ENCODE measurements at regions of chr17 and their contacts with region 1.

Region 1: GRCh38 chr17:64025732-64026294 is 5.4 kb upstream of the ICAM2 start:
- DNase-seq: peak; percentile 95 to 98 (median 96)
- H3K4me3 ChIP-seq: peak overlapping the region in 1 of 2 donors; percentile 43
- H3K4me3 Mint-ChIP-seq: peak overlapping the region; percentile 71 to 94 (median 87)
- H3K27ac ChIP-seq: peak overlapping the region; percentile 89
- H3K27ac Mint-ChIP-seq: peak overlapping the region; percentile 94 to 99 (median 98)
- H3K4me1 ChIP-seq: peaks cover 80% of the 10 kb centered on the region
- H3K4me1 Mint-ChIP-seq: peaks cover 42 to 75% (median 59%) of the 10 kb centered on the region in 4 donors
- H3K27me3 ChIP-seq: no peaks in the 10 kb centered on the region
- H3K27me3 Mint-ChIP-seq: no peaks in the 10 kb centered on the region

Region 2: GRCh38 chr17:63919311-63919723 is 106.5 kb before region 1 on chr17:
- CTCF ChIA-PET with region 1: interaction called, 351 read pairs
- POLR2A ChIA-PET with region 1: interaction called, 46 read pairs
- intact Hi-C with region 1: loop called (anchors 1 kb)
- DNase-seq: peak; percentile 70 to 81 (median 75)
- H3K4me3 ChIP-seq: no peak overlapping the region
- H3K4me3 Mint-ChIP-seq: no peak overlapping the region
- H3K27ac ChIP-seq: no peak overlapping the region
- H3K27ac Mint-ChIP-seq: peak overlapping the region in 6 of 7 donors; percentile 38 to 87 (median 62)
- H3K4me1 ChIP-seq: peaks cover 7% of the 10 kb centered on the region
- H3K4me1 Mint-ChIP-seq: peaks cover 6% of the 10 kb centered on the region in 4 donors
- H3K27me3 ChIP-seq: no peaks in the 10 kb centered on the region
- H3K27me3 Mint-ChIP-seq: peaks cover 0 to 2% of the 10 kb centered on the region in 2 donors

Region 3: DNA sequence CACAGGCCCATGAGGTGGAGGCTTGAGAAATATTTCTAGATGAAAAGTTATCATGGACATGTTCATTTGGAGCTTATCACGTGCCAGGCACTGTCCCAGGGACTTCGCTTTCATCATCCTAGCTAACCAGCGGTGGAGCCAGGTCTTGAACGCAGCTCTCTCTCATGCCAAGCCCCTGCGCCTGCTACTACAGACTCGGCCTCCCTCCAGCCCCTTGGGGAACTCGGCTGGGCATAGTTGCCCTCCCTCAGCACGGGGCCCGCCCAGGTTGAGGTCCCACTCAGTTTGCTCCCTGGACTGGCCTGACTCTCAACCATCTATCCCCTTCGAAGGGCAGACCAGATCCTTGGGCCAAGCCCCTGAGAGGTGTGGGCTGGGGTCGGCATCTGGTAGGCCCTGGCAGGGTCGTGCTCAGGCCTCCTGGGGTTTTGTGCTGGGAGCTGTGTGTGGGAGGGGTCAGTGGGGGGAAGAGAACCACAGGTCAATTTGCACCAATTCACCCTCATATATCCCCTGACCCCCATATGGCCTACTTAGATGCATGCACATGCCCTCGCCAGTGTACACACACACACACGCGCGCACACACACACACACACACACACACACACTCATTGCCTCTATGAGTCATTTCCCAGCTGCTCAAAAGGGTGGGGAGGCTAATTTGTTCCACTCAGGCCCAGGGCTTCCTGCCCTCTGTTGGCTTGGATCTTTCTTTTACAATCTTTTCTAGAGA is 41.0 kb before region 1 on chr17:
- CTCF ChIA-PET with region 1: interaction called, 556 read pairs
- POLR2A ChIA-PET with region 1: interaction called, 37 read pairs
- intact Hi-C with region 1: no loop called
- DNase-seq: peak; percentile 46 to 86 (median 70)
- H3K4me3 ChIP-seq: no peak overlapping the region
- H3K4me3 Mint-ChIP-seq: peak overlapping the region in 5 of 8 donors; percentile 10 to 86 (median 47)
- H3K27ac ChIP-seq: no peak overlapping the region
- H3K27ac Mint-ChIP-seq: peak overlapping the region; percentile 61 to 98 (median 87)
- H3K4me1 ChIP-seq: peaks cover 18% of the 10 kb centered on the region
- H3K4me1 Mint-ChIP-seq: peaks cover 16 to 29% (median 19%) of the 10 kb centered on the region in 4 donors
- H3K27me3 ChIP-seq: no peaks in the 10 kb centered on the region
- H3K27me3 Mint-ChIP-seq: peaks cover 0 to 2% of the 10 kb centered on the region in 2 donors

Region 4: GRCh38 chr17:64051153-64051552 is 25.3 kb after region 1 on chr17:
- CTCF ChIA-PET with region 1: interaction called, 110 read pairs
- POLR2A ChIA-PET with region 1: interaction called, 40 read pairs
- intact Hi-C with region 1: loop called (anchors 2 kb)
- DNase-seq: peak; percentile 50 to 84 (median 73)
- H3K4me3 ChIP-seq: no peak overlapping the region
- H3K4me3 Mint-ChIP-seq: peak overlapping the region in 7 of 8 donors; percentile 37 to 78 (median 68)
- H3K27ac ChIP-seq: peak overlapping the region; percentile 52
- H3K27ac Mint-ChIP-seq: peak overlapping the region; percentile 69 to 96 (median 91)
- H3K4me1 ChIP-seq: peaks cover 56% of the 10 kb centered on the region
- H3K4me1 Mint-ChIP-seq: peaks cover 35 to 76% (median 54%) of the 10 kb centered on the region in 4 donors
- H3K27me3 ChIP-seq: no peaks in the 10 kb centered on the region
- H3K27me3 Mint-ChIP-seq: no peaks in the 10 kb centered on the region

Region 5: DNA sequence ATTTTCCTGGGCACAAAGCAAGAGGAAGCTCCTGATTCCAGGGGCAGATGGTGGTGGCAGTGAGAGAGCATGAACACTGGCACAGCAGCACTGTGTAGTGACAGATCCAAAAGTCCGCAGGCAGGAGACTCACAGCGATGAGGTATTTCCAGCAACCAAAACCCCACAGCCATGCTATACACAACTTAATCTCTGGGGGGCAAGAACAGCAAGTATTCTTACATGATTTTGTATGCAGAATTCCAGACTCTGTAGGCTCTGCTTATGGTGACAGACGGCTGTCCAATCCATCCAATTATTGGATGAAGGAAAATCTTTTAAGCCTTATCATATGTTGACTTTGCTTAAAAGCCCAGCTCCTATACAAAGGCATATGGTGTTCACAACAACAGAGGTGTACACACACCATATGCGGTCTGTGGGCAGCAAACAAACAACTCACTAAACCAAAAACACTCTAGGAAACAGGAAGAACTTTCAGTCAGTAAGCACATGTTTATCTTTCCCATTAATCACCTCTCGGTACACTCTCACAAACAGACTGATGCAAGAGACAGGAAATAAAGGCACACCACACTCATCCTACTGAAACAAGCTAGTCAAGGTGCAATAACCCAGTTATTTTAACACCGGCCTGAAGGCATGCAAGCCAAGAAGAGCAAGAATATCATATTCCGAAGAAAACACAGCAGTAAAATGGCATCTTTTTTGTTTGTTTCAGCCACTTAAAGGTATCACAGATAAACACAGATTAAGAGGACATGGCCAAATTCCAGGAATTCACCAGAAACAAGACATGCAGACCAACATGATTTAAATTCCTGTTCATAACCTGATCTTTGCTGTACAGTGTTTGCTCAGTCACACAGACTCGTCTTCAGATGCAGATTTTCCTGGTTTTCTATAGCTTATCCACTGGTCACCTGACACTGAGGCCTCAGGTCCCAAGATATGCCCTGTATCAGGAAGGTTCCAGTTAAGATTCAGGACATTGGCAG is 56.3 kb after region 1 on chr17:
- CTCF ChIA-PET with region 1: interaction called, 15 read pairs
- POLR2A ChIA-PET with region 1: interaction called, 19 read pairs
- intact Hi-C with region 1: no loop called
- DNase-seq: peak; percentile 63 to 83 (median 75)
- H3K4me3 ChIP-seq: peak overlapping the region; percentile 4 to 21
- H3K4me3 Mint-ChIP-seq: peak overlapping the region in 5 of 8 donors; percentile 54 to 86 (median 80)
- H3K27ac ChIP-seq: peak overlapping the region; percentile 31
- H3K27ac Mint-ChIP-seq: peak overlapping the region in 1 of 7 donors; percentile 71
- H3K4me1 ChIP-seq: peaks cover 78% of the 10 kb centered on the region
- H3K4me1 Mint-ChIP-seq: peaks cover 18 to 34% (median 31%) of the 10 kb centered on the region in 4 donors
- H3K27me3 ChIP-seq: no peaks in the 10 kb centered on the region
- H3K27me3 Mint-ChIP-seq: no peaks in the 10 kb centered on the region